ENCODE measurements at regions of chr18 and their contacts with region 1.

Region 1: DNA sequence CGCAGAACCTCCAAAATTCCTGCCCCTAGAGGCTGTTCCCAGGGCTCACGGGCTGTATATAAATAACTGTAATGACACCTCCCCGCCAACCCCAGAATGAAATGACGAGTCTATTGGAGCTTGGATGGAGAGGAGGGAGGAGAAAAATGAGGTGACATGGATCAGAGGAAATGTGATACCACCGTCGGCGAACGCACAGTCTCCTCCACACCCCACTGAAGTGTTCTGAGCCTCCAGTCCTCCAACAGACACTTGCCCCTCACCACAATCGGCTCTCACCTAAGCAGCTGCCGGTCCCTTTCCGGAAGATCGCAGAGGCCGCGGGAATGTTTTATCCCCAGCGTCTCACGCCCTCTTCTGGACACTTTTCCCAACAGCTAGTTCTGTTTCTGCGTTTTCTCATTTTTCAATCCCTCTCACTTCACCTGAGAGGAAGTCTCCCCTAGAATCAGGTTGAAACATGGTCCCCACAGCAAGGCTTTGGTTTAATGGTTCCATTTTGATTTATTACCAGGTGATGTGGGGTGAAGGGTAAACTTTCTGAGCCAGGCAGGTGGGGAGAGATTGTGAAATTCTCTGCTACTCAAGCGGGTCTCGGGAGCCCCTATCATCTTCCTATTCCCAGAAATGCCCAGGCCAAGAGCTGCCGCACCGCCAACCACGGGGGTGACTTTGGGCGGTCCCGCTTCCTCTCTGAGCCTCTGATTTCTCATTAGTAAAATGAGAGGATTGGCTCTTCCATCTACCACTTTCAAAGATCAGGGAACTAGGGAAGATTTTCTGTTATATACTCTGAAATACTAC is 9.1 kb upstream of the MYO5B start:
- DNase-seq: peak in 2 of 3 donors; percentile 37 to 56
- ATAC-seq: peak; percentile 85 to 92 (median 88)
- H3K4me3 ChIP-seq: no peak overlapping the region
- H3K27ac ChIP-seq: no peak overlapping the region
- H3K4me1 ChIP-seq: no peaks in the 10 kb centered on the region
- H3K27me3 ChIP-seq: no peaks in the 10 kb centered on the region
- CTCF ChIP-seq: peak; percentile 58 to 77 (median 66)
- POLR2A ChIP-seq: no peak

Region 2: GRCh38 chr18:50009773-50010335 is 194.1 kb before region 1 on chr18:
- intact Hi-C with region 1: loop called in 1 of 2 experiments (anchors 10 kb)
- DNase-seq: peak; percentile 52 to 60 (median 55)
- ATAC-seq: peak; percentile 95 to 97 (median 96)
- H3K4me3 ChIP-seq: no peak overlapping the region
- H3K27ac ChIP-seq: no peak overlapping the region
- H3K4me1 ChIP-seq: no peaks in the 10 kb centered on the region
- H3K27me3 ChIP-seq: no peaks in the 10 kb centered on the region
- CTCF ChIP-seq: peak; percentile 54 to 69 (median 68)
- POLR2A ChIP-seq: no peak

Region 3: GRCh38 chr18:50350699-50351098 is 146.7 kb after region 1 on chr18:
- intact Hi-C with region 1: no loop called
- DNase-seq: no peak
- ATAC-seq: no peak
- H3K4me3 ChIP-seq: no peak overlapping the region
- H3K27ac ChIP-seq: no peak overlapping the region
- H3K4me1 ChIP-seq: no peaks in the 10 kb centered on the region
- H3K27me3 ChIP-seq: no peaks in the 10 kb centered on the region
- CTCF ChIP-seq: no peak
- POLR2A ChIP-seq: no peak

Measured in right lobe of liver (tissue), 6 donors.